BJ (cell line): ENCODE measurements at regions of chr2 and their contacts with region 1.

Region 1: DNA sequence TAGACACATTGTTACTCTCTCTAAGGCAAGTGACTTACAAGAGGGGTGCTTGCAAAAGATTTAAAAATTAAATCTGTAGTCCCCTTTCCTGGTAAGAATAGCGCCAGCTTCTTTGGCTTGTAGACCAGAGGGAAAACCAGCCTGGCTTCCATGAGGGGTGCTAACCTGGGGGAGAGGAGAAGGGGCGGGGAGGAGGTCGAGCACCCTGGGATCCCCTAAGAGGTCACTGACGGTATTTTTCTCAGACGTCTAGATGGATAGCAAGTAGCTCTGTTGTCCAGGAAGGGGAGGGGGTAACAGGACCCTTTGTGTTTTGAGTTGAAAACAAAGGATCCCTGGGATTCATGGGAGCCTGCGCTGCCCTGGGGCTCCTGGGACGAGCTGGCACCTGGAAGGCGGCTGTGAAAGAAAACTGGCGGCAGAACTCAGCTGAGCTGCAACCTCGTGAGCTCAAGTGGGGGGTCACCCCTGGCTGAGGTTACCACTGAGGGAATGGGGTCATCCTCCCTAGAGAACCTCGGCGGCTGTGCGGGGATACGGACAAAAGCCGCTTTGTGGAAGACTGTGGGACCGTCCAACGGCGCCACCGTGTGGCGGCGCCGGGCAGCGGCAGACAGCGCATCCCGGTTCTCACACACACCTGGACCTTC is 37.8 kb upstream of the MRPL19 start:
- DNase-seq: no peak
- H3K4me3 ChIP-seq: no peak overlapping the region
- H3K27me3 ChIP-seq: peaks cover 1% of the 10 kb centered on the region
- CTCF ChIP-seq: peak; percentile 99

Region 2: GRCh38 chr2:75459565-75460310 is 149.1 kb before region 1 on chr2:
- CTCF ChIA-PET with region 1: interaction called, 215 read pairs
- POLR2A ChIA-PET with region 1: no interaction called
- DNase-seq: peak; percentile 62
- H3K4me3 ChIP-seq: no peak overlapping the region
- H3K27me3 ChIP-seq: peaks cover 21% of the 10 kb centered on the region
- CTCF ChIP-seq: no peak

Region 3: GRCh38 chr2:75560768-75561565 is 47.8 kb before region 1 on chr2 and contains the start of gene EVA1A:
- CTCF ChIA-PET with region 1: interaction called, 70 read pairs
- POLR2A ChIA-PET with region 1: interaction called, 5 read pairs
- DNase-seq: peak; percentile 39
- H3K4me3 ChIP-seq: peak within 1 kb of the TSS; percentile 78
- H3K27me3 ChIP-seq: no peaks in the 10 kb centered on the region
- CTCF ChIP-seq: no peak
- polyA plus RNA-seq, gene EVA1A: 30.2 and 41.0 TPM in 2 replicates

Region 4: DNA sequence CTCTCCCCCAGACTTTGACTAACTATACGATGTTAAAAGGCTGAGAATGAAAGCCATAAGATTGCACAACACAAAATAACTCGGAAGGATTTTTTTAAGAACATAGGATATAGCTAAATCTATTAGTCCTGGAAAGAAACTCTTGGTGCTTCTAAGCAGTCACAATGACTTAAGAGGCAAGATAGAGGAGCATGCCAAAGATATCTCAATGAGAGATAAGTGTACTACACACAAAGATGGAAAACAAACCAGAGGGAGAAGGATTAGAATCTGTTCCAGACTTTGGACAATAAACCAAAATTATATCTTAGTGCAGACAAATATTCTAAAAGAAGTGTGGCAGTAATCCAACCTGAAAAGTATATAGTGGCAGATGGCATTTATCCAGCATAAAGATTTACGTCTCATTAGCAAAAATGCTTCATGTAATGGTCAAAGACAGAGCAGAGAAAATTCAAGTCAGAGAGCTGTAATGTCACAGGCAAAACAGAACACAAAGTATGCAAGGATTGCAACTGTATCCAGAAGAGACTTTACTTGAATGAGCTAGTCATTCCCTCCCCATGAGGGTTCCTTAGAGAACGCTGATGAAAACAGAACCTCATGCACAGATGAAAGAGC is 19.3 kb before region 1 on chr2:
- CTCF ChIA-PET with region 1: interaction called, 17 read pairs
- POLR2A ChIA-PET with region 1: no interaction called
- DNase-seq: no peak
- H3K4me3 ChIP-seq: no peak overlapping the region
- H3K27me3 ChIP-seq: no peaks in the 10 kb centered on the region
- CTCF ChIP-seq: no peak

Region 5: GRCh38 chr2:75627895-75628504 is 19.2 kb after region 1 on chr2:
- CTCF ChIA-PET with region 1: interaction called, 29 read pairs
- POLR2A ChIA-PET with region 1: no interaction called
- DNase-seq: no peak
- H3K4me3 ChIP-seq: no peak overlapping the region
- H3K27me3 ChIP-seq: peaks cover 8% of the 10 kb centered on the region
- CTCF ChIP-seq: peak; percentile 98